Naive thymus-derived CD8-positive, alpha-beta T cell (primary cell): ENCODE measurements at regions of chr13 and their contacts with region 1.

Region 1: DNA sequence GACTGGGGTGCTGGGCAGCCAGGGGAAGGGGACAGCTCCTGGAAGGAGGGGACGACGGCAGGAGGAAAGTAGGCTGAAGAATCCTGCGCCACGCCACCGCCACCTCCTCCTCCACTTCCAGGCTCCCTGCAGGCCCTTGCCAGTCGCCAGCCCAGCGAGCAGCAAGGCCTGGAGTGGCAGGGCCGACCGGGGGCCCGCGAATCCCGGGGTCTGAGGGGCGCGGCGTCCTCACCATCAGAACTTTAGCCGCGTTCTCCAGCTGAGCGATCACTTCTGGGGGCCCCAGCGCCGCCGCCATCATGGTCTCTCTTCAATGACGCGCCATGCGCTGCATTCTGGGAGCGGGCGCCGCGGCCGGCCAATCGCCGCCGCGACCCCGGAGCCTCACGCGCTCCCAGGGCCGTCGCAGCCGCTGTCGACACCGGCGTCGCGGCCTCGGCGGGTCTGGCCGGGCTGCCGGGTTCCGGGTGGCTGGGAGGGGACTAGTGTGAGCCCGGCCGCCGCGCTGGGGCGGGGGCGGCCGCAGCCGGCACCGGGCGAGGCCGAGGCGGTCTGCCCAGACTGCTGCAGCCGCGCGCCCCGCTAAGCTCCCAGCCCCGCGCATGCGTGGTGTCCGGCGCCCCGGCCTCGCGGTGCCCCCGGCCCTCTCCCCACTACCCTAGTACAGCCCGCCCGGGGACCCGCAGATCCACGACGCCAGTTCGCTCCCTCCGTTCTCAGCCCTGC is at the start of gene XPO4:
- DNase-seq: peak; percentile 65 to 85 (median 78)
- ATAC-seq: peak; percentile 95
- H3K4me3 Mint-ChIP-seq: peak within 1 kb of the TSS; percentile 90 to 99 (median 95)
- H3K27ac Mint-ChIP-seq: peak within 1 kb of the TSS; percentile 91 to 99 (median 96)
- H3K4me1 Mint-ChIP-seq: peaks cover 10 to 37% (median 34%) of the 10 kb centered on the region in 4 donors
- H3K27me3 Mint-ChIP-seq: peaks cover 0 to 2% (median 0%) of the 10 kb centered on the region in 5 donors
- polyA plus RNA-seq, gene XPO4: 5.4 to 8.1 (median 5.9) TPM

Region 2: DNA sequence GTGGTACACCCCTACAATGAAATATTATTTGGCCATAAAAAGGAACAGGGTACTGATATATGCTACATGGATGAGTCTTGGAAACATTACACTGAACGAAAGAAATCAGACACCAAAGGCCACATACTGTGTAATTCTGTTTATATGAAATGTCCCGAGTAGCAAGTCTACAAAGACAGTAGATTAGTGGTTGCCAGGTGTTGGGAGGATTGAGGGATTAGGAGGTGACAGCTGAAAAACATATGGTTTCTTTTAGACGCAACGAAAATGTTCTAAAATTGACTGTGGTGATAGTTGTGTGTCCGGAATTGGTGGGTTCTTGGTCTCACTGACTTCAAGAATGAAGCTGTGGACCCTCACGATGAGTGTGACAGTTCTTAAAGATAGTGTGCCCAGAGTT is 164.0 kb before region 1 on chr13:
- POLR2A ChIA-PET with region 1: no interaction called
- DNase-seq: no peak
- ATAC-seq: no peak
- H3K4me3 Mint-ChIP-seq: no peak overlapping the region
- H3K27ac Mint-ChIP-seq: no peak overlapping the region
- H3K4me1 Mint-ChIP-seq: no peaks in the 10 kb centered on the region
- H3K27me3 Mint-ChIP-seq: no peaks in the 10 kb centered on the region

Region 3: DNA sequence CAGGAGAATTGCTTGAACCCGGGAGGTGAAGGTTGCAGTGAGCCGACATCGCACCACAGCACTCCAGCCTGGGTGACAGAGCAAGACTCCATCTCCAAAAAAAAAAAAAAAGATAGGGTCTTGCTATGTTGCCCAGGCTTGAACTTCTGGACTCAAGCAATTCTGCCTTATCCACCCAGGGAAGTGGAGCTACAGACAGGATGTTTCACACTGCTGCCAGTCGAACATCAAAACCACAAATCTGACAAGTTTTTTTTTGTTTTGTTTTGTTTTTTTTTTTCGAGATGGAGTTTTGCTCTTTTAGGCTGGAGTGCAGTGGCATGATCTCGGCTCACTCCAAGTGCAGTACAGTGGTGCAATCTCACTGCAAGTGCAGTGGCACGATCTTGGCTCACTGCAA is 10.8 kb before region 1 on chr13:
- POLR2A ChIA-PET with region 1: interaction called, 21 read pairs
- DNase-seq: peak in 3 of 10 donors; percentile 29 to 42 (median 41)
- ATAC-seq: peak; percentile 49 to 73
- H3K4me3 Mint-ChIP-seq: peak overlapping the region in 2 of 10 donors; percentile 15 to 49
- H3K27ac Mint-ChIP-seq: peak overlapping the region in 2 of 10 donors; percentile 52
- H3K4me1 Mint-ChIP-seq: peaks cover 16 to 60% (median 34%) of the 10 kb centered on the region in 4 donors
- H3K27me3 Mint-ChIP-seq: no peaks in the 10 kb centered on the region